ENCODE measurements at regions of chr7 and their contacts with region 1.

Region 1: DNA sequence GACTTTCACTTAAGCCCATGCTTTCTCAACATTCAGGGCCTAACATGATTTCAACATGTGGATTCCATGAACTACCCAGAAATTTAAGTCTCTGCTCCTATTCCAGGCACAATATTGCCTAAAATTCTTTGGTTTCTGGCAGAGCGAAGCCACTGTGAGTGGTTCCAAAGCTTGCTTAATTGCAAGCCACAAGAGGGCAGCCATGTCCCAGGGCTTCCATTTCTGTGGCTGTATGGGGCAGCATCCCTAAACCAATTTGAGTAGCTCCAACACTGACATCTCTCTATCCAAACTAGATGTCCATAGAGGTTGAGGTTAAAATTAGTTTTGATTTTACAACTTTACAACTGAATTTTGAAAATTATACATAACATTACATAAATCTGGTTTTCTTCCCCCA is 56.3 kb upstream of the MDFIC start:
- DNase-seq: peak; percentile 41
- CTCF ChIP-seq: peak; percentile 70

Region 2: GRCh38 chr7:114765331-114766040 is 100.1 kb before region 1 on chr7:
- CTCF ChIA-PET with region 1: no interaction called
- POLR2A ChIA-PET with region 1: no interaction called
- DNase-seq: no peak
- CTCF ChIP-seq: no peak

Region 3: DNA sequence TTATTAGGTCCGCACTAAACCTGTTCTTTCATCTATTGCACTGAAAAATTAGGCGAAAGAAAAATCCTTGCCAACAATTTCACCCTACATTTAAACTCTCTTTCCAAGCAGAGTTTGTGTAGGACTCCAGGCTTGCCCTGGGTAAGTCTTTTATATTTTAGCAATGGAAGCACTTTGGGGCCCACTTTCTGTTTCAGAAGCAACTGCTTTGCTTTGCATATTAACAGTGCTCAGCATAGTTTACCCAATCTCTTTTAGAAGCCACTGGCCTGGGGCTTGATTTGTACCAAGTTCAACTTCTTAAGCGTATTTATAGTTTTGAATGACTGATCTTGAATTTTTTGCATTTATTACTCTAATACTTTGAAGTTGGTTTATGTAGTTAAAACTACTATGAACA is 22.5 kb before region 1 on chr7:
- CTCF ChIA-PET with region 1: interaction called, 10 read pairs
- POLR2A ChIA-PET with region 1: no interaction called
- DNase-seq: no peak
- CTCF ChIP-seq: no peak

Region 4: DNA sequence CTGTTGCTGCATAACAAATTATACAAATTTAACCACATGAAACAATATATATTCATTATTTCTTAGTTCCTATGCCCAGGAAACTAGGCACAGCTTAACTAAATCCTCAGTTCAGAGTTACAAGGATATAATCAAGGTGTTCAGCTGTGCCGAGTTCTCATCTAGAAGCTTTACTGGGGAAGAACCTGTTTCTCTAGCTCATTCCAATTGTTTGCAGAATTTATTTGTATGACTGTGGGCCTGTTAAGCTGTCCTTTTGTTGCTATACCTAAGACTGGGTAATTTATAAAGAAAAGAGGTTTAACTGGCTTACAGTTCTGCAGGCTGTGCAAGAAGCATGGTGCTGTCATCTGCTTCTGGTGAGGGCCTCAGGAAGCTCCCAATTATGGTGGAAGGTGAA is 34.6 kb after region 1 on chr7:
- CTCF ChIA-PET with region 1: interaction called, 11 read pairs
- POLR2A ChIA-PET with region 1: no interaction called
- DNase-seq: no peak
- CTCF ChIP-seq: no peak

Region 5: DNA sequence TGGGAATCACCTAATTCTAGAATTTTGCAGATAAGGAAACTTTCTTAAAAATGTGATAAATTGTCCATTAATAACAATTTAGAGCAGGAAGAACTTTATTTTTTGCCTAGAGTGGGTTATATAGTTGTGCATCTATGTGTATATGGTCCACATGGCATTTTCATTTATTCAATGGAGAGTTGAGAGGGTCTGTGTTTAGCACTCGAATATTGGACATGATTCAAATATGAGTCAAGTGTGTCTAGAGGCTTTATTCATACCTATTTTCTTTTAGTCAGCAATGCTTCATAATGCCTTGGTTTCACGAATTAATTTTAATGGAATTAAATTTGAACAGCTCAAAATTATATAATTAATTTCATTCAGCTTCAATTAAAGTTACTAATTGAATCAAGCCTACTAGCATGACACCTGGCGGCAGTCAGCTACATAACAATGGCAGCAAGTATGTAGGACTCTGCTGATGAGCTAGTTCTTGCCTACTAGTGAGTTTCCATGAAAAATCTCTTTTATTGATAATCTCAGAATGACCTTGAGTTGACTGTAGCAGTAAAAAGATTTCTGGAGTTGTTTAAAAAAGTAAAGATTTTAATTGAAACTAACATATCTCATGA is 74.0 kb after region 1 on chr7:
- CTCF ChIA-PET with region 1: interaction called, 16 read pairs
- POLR2A ChIA-PET with region 1: no interaction called
- DNase-seq: no peak
- CTCF ChIP-seq: peak; percentile 60

Region 6: GRCh38 chr7:114944745-114945625 is 79.4 kb after region 1 on chr7:
- CTCF ChIA-PET with region 1: interaction called, 16 read pairs
- POLR2A ChIA-PET with region 1: no interaction called
- DNase-seq: no peak
- CTCF ChIP-seq: no peak

Region 7: DNA sequence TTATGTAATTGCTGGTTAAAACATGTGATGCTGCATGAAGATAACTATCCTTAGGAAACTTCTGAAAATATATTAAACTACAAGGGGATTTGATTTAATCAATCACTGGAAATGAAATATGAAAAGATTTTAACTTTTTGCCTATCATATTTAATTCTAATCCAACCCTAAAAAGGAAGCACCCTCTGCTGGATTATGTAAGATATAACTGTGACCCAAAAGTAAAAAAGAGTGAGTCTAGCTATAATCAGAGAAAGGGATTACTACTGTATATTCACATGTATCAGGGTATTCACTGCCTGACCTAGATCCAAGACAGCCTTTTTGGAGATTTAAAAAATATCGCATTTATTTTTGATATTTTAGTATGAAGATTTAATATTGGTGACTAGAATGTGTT is 351.8 kb after region 1 on chr7:
- CTCF ChIA-PET with region 1: interaction called, 23 read pairs
- POLR2A ChIA-PET with region 1: no interaction called
- DNase-seq: no peak
- CTCF ChIP-seq: peak; percentile 31

Measured in GM10248 (cell line).